Sigmoid colon (tissue), 7 donors: ENCODE measurements at regions of chr1 and their contacts with region 1.

Region 1: DNA sequence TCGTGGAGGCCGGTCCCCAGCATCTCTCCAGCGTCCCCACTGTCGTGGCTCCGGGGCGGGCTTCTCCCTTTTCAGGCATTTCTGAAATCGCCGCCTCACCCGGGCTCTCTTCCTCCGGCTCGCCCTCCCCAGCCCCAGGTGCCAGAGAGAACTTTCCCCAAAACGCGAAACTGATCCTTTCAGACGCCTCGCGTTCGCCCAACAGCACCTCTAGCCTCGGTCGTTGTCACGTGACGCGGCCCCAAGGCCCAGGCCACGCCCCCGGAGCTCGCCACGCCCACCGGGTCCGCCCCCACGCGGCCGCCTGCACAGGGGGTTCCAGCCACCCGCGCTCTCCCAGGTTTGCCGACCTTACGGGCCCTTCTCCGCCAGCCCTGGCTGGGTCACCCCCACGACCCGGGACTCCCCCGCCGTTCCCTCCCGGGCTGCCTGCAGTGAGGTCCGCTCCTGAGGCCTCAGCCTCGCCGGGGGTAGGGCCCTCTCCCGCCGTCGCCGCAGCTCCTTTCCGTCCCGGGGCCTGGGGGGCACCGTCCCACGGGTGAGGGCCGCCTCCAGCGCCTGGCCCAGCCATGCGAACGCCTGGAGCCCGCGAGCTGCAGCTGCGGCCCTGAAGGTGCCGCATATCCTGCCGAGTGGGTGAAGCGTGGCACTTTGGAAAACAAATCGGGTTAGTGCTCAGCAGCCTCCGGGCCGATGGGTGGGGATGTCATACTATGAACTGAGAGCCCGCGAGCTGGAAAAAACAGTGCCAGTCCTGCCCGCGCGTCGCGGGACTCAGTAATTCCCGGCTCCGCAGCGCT is 21.0 kb downstream of the H3-3A start:
- DNase-seq: peak; percentile 94
- H3K4me3 ChIP-seq: peak overlapping the region; percentile 40 to 76 (median 58)
- H3K27ac ChIP-seq: peak overlapping the region; percentile 75 to 84 (median 77)
- H3K4me1 ChIP-seq: peaks cover 0 to 13% (median 12%) of the 10 kb centered on the region in 4 donors
- H3K27me3 ChIP-seq: no peaks in the 10 kb centered on the region
- CTCF ChIP-seq: no peak
- EP300 ChIP-seq: no peak
- POLR2A ChIP-seq: peak in 1 of 2 donors; percentile 20

Region 2: DNA sequence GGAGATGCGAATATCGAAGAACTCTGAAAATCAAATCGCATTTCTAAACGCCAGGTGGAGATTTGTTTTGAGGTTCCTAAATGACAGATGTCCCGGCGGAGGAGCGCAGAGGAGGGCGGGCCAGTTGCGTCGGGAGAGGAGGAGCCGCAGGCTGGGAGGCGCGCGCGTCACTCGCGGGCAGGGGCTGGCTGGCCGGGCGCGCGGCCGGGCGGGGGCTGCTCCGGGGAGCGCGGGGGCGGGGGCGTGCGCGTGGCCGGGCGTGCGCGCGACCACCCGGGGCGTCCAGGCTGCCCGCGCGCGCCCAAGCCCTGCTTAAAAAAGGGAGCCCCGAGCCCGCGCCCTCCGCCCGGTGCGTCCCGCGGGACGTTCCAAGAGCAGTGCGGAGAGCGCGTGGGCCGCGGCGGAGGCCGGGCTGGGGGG is 26.3 kb after region 1 on chr1:
- intact Hi-C with region 1: loop called (anchors 2 kb)
- DNase-seq: peak; percentile 94
- H3K4me3 ChIP-seq: peak overlapping the region; percentile 50 to 91 (median 78)
- H3K27ac ChIP-seq: peak overlapping the region; percentile 90 to 99 (median 98)
- H3K4me1 ChIP-seq: peaks cover 0 to 28% (median 20%) of the 10 kb centered on the region in 4 donors
- H3K27me3 ChIP-seq: no peaks in the 10 kb centered on the region
- CTCF ChIP-seq: peak in 1 of 4 experiments; percentile 20
- EP300 ChIP-seq: no peak
- POLR2A ChIP-seq: no peak